ENCODE measurements at regions of chr16 and their contacts with region 1.

Region 1: DNA sequence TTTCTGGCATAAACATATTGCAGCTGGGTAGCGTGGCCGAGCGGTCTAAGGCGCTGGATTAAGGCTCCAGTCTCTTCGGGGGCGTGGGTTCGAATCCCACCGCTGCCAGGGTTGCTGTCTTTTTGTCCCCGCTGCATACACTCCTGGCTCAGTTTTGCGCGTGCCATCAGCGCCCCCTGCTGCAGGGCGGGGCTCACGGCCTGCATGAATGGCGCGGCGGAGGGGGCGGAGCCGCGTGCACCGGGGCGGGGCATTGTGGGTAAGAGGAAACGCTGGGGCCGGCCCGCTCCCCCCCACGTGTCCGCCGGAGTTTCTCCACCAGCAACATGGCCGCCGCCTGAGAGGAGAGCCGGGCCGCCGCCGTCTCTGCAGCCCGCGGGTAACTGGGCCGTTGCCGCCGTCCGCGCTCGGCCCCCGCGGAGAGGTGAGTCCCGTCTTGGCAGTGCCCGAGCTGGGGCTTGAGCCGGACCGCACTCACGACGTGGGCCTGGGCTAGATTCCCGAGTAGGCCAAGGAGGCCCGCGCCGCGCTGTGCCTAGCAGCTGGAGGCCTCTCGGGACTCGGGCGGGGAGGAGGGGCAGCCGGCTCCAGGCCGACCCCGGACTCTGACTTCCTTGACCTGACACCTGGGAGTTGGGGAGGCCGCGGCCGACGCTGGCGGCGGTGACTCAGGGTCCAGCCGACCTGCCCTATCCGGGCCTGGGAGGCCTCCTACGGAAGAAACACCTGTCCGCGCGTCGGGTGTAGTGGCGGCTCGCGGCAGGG is at the start of gene POLR3E:
- DNase-seq: peak; percentile 98 to 100
- H3K4me3 ChIP-seq: peak within 1 kb of the TSS; percentile 83 to 93
- H3K27ac ChIP-seq: peak within 1 kb of the TSS; percentile 94 to 97
- H3K4me1 ChIP-seq: peaks cover 3% of the 10 kb centered on the region in 2 donors
- H3K27me3 ChIP-seq: no peaks in the 10 kb centered on the region
- CTCF ChIP-seq: peak; percentile 93 to 99 (median 94)
- total RNA-seq, gene POLR3E: 19.5 TPM

Region 2: DNA sequence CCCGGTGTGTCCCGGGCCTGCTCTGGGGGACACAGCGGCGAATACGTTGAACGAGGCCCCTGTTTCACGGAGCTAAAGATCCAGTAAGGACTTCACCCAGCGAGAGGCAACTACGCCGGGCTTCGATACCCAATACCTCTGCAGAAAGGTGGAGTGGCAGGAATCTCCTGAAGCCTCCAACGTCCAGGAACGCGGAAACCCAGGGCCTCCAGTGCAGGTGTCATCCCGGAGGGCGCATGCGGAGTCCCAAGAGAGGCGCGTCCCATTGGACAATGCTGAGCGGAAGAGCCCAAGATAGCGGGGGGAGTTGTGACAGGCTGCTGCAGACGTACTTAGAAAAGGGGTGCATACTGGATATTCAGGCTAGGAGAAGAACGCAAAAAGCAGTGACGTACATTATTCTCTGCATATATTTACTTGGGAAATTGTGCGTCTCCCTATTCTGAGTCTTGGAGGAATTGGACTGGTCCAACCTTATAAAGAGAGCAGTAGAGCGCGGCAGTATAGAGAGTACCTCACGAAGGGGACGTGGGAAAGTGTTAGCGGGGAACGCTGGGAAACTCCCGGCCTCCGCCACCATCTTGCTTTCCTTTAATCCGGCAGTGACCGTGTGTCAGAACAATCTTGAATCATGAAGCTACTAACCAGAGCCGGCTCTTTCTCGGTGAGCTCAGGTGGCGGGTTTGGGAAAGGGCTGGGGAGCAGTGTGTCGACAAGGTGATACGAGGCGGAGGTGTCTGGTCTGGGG is 344.3 kb before region 1 on chr16 and contains the start of gene UQCRC2:
- intact Hi-C with region 1: loop called (anchors 5 kb)
- DNase-seq: peak; percentile 48 to 92
- H3K4me3 ChIP-seq: peak within 1 kb of the TSS; percentile 84 to 87
- H3K27ac ChIP-seq: peak within 1 kb of the TSS; percentile 92 to 94
- H3K4me1 ChIP-seq: peaks cover 6 to 20% of the 10 kb centered on the region in 2 donors
- H3K27me3 ChIP-seq: no peaks in the 10 kb centered on the region
- CTCF ChIP-seq: peak in 1 of 3 experiments; percentile 2
- total RNA-seq, gene UQCRC2: 66.3 TPM

Region 3: DNA sequence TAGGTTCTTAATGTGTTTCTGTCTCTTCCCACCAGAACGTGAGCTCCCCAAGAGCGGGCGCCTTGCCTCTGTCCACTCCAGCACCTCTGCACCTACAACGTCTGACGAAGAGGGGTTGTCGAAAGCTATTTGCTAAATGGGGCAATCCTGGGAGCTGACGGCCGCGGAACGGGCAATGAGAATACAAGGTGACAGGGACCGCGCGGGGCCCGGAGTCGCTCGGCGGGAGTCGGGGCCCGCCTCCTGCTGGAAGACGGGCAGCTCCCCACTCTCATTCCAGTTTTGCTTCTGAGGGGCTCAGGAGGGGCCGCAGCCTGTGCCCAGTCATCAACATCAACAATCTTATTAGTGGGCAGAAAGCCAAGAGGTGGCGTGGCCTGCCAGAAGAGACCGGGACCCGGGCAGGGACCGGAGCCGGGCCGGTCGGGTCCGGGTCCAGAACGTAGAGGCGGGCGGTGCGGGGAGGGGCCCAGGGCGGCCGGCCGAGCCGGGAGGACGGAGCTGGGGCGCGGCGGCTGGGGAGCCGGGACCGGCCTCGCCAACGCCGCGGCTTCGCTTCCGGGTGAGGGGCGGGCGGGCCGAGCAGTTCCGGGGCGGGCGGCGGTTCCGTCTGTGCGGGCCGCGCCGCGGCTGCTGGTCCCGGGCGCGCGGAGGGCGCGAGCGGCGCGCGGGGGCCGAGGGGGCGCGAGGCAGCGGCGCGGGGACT is 289.6 kb before region 1 on chr16 and contains the start of gene MOSMO:
- intact Hi-C with region 1: loop called (anchors 5 kb)
- DNase-seq: peak in 1 of 2 donors; percentile 84
- H3K4me3 ChIP-seq: peak within 1 kb of the TSS; percentile 87 to 88
- H3K27ac ChIP-seq: peak within 1 kb of the TSS; percentile 65 to 79
- H3K4me1 ChIP-seq: peaks cover 7 to 15% of the 10 kb centered on the region in 2 donors
- H3K27me3 ChIP-seq: no peaks in the 10 kb centered on the region
- CTCF ChIP-seq: no peak
- total RNA-seq, gene MOSMO: 3.6 TPM

Region 4: DNA sequence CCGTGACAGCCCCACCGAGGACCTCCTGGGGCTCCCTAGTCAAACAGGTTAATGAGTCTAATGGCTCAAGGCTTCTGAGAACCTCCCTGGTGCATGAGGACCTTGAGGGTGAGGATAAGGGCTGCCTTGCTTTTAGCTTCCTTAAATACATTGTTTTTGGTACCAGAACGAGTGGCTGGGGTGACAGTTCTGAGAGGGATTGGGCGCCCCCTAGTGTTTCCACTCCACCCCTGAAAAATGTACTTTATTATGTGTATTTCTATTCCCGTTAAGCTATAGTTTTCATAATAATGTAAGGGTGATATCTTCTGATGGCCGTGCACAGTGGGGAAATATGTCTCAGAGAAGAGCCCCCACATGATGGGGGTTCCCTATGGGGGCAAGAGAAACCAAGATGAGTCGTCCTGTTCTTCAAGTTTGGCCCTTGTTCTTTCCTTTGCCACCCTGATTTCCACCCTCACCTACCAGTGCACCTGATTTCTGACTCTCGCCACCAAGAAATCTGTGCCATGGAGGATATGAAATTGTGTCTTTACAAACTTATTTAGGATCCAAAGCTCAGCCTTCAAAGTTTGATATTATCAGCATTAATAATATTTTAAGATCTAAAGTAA is 219.5 kb before region 1 on chr16:
- intact Hi-C with region 1: loop called (anchors 10 kb)
- DNase-seq: peak in 1 of 2 donors; percentile 70
- H3K4me3 ChIP-seq: no peak overlapping the region
- H3K27ac ChIP-seq: no peak overlapping the region
- H3K4me1 ChIP-seq: no peaks in the 10 kb centered on the region
- H3K27me3 ChIP-seq: no peaks in the 10 kb centered on the region
- CTCF ChIP-seq: peak; percentile 49 to 72 (median 65)

Region 5: GRCh38 chr16:22250522-22250921 is 46.8 kb before region 1 on chr16:
- intact Hi-C with region 1: no loop called
- DNase-seq: no peak
- H3K4me3 ChIP-seq: no peak overlapping the region
- H3K27ac ChIP-seq: peak overlapping the region in 1 of 2 donors; percentile 19
- H3K4me1 ChIP-seq: no peaks in the 10 kb centered on the region
- H3K27me3 ChIP-seq: no peaks in the 10 kb centered on the region
- CTCF ChIP-seq: no peak

Region 6: DNA sequence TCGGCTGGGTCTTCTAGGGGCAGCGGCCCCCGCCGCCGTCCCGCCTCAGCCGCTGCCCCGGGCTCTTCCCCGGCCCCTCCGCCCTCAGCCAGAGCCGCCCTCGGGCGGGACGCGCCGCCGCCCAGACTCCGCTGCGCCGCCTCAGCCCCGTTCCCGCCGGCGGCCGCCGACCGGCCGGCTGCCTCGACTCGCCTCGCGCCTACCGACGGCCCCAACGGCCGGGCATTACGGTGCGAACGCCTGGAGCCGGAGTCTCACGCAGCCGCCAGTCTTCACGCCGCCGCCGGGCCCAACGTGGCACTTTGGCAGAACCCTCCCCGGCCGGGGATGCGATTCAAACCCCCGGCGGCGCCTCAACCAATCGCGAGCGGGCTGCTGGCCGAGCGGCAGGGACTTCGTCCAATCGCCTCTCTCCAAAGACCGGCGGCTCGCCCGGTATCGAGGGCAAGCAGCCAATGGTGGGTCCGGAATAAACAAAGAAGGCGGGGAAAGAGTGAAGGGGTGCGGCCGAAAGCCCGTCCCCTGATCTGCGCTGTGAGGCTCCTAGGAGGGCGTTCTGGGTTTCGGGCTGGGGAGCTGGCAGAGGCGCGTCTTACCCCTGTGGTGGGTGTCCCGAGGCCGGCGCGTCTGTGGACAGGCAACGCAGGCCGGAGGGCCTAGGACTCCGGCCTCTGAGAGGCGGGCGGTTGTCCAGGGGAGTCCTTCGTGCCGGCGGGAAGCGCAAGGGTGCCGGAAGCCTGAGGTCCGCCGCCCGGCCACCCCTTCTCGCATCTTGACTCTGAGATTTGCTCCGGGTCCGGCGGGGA is 77.2 kb after region 1 on chr16 and contains the start of gene CDR2:
- intact Hi-C with region 1: loop called (anchors 5 kb)
- DNase-seq: peak; percentile 90 to 99
- H3K4me3 ChIP-seq: peak within 1 kb of the TSS; percentile 97 to 98
- H3K27ac ChIP-seq: peak within 1 kb of the TSS; percentile 92 to 93
- H3K4me1 ChIP-seq: peaks cover 11 to 12% of the 10 kb centered on the region in 2 donors
- H3K27me3 ChIP-seq: no peaks in the 10 kb centered on the region
- CTCF ChIP-seq: no peak
- total RNA-seq, gene CDR2: 36.3 TPM

Measured in ascending aorta (tissue), 2 donors.